HCT116 (cell line): ENCODE measurements at regions of chr1 and their contacts with region 1.

Region 1: GRCh38 chr1:92749024-92749634 is 35.8 kb downstream of the EVI5 start:
- DNase-seq: peak; percentile 51
- ATAC-seq: peak; percentile 89
- H3K4me3 ChIP-seq: no peak overlapping the region
- H3K27ac ChIP-seq: no peak overlapping the region
- H3K4me1 ChIP-seq: peaks cover 0 to 5% of the 10 kb centered on the region in 2 experiments; a peak in 2 of 4 replicates
- H3K27me3 ChIP-seq: no peaks in the 10 kb centered on the region
- CTCF ChIP-seq: peak; percentile 63 to 85 (median 70)
- POLR2A ChIP-seq: no peak
- RAD21 ChIP-seq: peak; percentile 73

Region 2: GRCh38 chr1:92343061-92343460 is 406.1 kb before region 1 on chr1:
- CTCF ChIA-PET with region 1: no interaction called
- POLR2A ChIA-PET with region 1: no interaction called
- RAD21 ChIA-PET with region 1: no interaction called
- intact Hi-C with region 1: no loop called
- DNase-seq: no peak
- ATAC-seq: no peak
- H3K4me3 ChIP-seq: no peak overlapping the region
- H3K27ac ChIP-seq: no peak overlapping the region
- H3K4me1 ChIP-seq: no peaks in the 10 kb centered on the region
- H3K27me3 ChIP-seq: no peaks in the 10 kb centered on the region
- CTCF ChIP-seq: no peak
- POLR2A ChIP-seq: no peak
- RAD21 ChIP-seq: no peak

Region 3: GRCh38 chr1:92759361-92759760 is 10.2 kb after region 1 on chr1:
- CTCF ChIA-PET with region 1: interaction called, 10 read pairs
- POLR2A ChIA-PET with region 1: no interaction called
- RAD21 ChIA-PET with region 1: no interaction called
- intact Hi-C with region 1: no loop called
- DNase-seq: no peak
- ATAC-seq: no peak
- H3K4me3 ChIP-seq: no peak overlapping the region
- H3K27ac ChIP-seq: no peak overlapping the region
- H3K4me1 ChIP-seq: peaks cover 0 to 1% of the 10 kb centered on the region in 2 experiments; a peak in 1 of 4 replicates
- H3K27me3 ChIP-seq: no peaks in the 10 kb centered on the region
- CTCF ChIP-seq: no peak
- POLR2A ChIP-seq: no peak
- RAD21 ChIP-seq: no peak

Region 4: DNA sequence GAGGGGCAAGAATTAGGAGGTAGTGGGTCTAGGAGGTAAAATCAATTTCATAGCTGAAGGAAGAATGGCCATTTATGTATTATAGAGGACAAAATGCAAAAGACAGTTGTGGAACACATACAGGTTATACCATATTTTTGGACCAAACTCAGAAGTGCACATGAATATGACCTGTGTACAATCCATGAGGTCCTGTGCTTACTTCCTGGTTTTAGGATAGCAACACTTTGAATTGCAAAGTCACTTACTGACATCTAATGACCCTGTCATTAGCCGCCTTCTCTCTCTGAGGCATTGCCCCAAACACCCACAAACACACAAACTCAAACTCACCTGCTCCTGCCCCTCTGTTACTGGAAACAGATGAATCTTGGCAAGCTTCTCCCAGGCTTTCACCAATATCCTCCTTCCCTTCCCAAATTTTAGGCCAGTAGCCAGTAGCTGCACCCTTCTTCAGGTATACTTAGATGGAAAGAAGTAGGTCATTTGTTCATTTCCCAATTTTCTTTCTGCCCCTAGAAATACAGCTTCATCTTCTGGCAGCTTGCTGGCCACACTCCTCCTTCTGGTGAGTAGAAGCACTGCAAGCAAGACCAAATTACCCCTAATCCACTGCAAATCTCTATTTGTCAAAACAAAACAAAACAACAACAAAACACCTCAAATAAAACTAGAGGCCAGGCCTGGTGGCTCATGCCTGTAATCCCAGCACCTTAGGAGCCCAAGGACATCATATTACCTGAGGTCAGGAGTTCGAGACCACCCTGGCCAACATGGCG is 69.0 kb after region 1 on chr1:
- CTCF ChIA-PET with region 1: interaction called, 38 read pairs
- POLR2A ChIA-PET with region 1: no interaction called
- RAD21 ChIA-PET with region 1: interaction called, 6 to 8 read pairs
- intact Hi-C with region 1: loop called (anchors 1 kb)
- DNase-seq: peak; percentile 36
- ATAC-seq: peak; percentile 79
- H3K4me3 ChIP-seq: no peak overlapping the region
- H3K27ac ChIP-seq: no peak overlapping the region
- H3K4me1 ChIP-seq: peaks cover 0 to 15% of the 10 kb centered on the region in 2 experiments; a peak in 1 of 4 replicates
- H3K27me3 ChIP-seq: no peaks in the 10 kb centered on the region
- CTCF ChIP-seq: peak; percentile 63 to 78 (median 73)
- POLR2A ChIP-seq: no peak
- RAD21 ChIP-seq: peak; percentile 61